CD4-positive, alpha-beta T cell (primary cell): ENCODE measurements at regions of chr16 and their contacts with region 1.

Region 1: DNA sequence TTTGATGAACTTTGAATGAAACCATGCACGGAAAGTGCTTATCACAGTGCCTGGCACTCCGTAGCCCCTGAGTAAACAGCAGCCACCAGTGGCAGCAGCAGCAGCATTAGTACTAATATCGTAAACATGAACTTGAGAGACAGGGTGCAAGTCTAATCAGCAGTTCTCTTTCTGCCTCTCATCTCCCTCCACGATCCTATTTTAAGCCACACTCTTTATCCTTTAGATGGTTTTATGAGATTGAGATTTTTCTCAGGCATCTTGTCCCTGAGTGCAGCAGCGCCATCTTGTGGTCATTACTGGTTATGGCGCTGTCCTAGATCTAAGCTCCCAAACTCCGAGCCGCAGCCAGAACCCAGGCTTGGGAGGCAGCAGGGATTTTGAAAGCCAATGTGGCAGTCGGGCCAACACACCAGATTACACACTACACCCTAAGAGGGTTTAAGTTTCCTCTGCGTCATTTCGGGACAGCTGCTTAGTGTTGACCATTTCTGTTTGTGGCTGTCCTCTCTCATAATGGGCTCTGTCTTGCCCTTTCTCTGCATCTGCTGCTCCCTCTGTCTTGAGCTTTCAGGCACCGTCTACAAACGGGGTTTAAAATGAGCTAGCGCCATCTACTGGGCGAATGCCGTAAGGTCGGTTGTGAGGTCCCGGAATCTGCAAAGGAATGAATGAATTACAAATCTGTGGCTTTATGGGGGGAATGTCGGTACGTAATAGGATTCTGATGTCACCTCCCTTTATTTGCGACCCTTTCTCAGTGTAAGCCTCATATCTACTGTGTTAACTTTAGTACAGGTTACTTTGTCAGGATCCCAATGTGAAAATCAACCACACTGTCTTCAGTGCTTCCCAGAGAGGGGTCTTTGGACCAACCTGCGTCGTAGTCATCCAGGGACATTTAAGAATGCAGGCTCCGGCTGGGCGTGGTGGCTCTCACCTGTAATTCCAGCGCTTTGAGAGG is 64.5 kb downstream of the CYLD start:
- DNase-seq: peak; percentile 76 to 93 (median 81)
- ATAC-seq: peak; percentile 94
- H3K4me3 ChIP-seq: peak overlapping the region; percentile 37
- H3K4me3 Mint-ChIP-seq: peak overlapping the region; percentile 80
- H3K27ac ChIP-seq: no peak overlapping the region
- H3K27ac Mint-ChIP-seq: peak overlapping the region; percentile 83
- H3K4me1 ChIP-seq: peaks cover 15% of the 10 kb centered on the region
- H3K4me1 Mint-ChIP-seq: peaks cover 13% of the 10 kb centered on the region
- H3K27me3 ChIP-seq: no peaks in the 10 kb centered on the region
- H3K27me3 Mint-ChIP-seq: no peaks in the 10 kb centered on the region
- CTCF ChIP-seq: peak; percentile 99

Region 2: DNA sequence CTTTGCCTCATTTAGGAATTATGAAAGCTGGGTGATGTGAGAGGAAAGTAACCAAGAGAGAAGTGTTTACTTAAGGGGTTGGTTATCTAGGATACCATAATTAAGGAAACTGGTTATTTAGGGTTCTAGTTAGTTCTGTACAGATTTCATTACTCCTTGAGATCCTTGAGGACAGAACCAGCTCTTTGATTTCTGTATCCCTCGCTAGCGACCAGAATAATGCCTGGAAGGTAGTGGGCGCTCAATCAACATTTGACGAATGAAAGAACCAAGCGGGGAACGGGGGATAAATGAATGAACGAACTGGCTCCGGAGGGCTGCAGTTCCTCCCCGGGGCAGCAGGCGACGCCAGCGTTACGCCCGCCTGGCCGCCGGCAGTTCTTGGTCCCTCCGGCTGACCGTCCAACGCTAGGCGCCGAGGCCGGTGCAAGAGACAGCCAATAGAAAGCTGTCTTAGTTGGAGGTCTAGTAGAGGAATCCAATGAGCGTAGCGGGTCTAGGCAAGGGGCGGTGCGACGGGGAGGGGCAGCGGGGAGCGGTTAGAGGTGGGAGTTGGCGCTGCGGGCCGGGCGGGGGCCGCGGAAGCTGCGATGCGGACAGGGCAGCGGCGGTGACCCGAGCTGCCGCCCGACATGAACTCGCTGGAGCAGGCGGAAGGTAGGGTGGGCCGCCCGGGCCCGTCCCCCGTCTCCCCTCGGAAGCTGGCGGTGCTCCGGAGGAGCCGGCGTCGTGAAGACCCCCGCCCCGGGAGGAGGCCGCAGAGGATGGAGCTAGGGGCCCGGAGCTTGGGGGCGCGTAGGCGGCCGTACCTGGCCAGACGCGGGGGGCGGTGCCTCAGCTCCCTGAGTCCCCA is 781.5 kb before region 1 on chr16 and contains the start of gene CNEP1R1:
- CTCF ChIA-PET with region 1: interaction called, 19 read pairs
- POLR2A ChIA-PET with region 1: interaction called, 13 read pairs
- intact Hi-C with region 1: loop called (anchors 1 to 2 kb)
- DNase-seq: peak; percentile 83 to 97 (median 91)
- ATAC-seq: peak; percentile 90
- H3K4me3 ChIP-seq: peak within 1 kb of the TSS; percentile 90
- H3K4me3 Mint-ChIP-seq: peak within 1 kb of the TSS; percentile 94
- H3K27ac ChIP-seq: peak within 1 kb of the TSS; percentile 58
- H3K27ac Mint-ChIP-seq: peak within 1 kb of the TSS; percentile 90
- H3K4me1 ChIP-seq: peaks cover 25% of the 10 kb centered on the region
- H3K4me1 Mint-ChIP-seq: peaks cover 38% of the 10 kb centered on the region
- H3K27me3 ChIP-seq: no peaks in the 10 kb centered on the region
- H3K27me3 Mint-ChIP-seq: no peaks in the 10 kb centered on the region
- CTCF ChIP-seq: peak; percentile 99
- total RNA-seq, gene CNEP1R1: 36.6 to 46.3 TPM

Region 3: GRCh38 chr16:50215680-50216079 is 590.7 kb before region 1 on chr16:
- CTCF ChIA-PET with region 1: interaction called, 8 read pairs
- POLR2A ChIA-PET with region 1: interaction called, 6 read pairs
- intact Hi-C with region 1: loop called (anchors 1 kb)
- DNase-seq: no peak
- ATAC-seq: no peak
- H3K4me3 ChIP-seq: no peak overlapping the region
- H3K4me3 Mint-ChIP-seq: no peak overlapping the region
- H3K27ac ChIP-seq: no peak overlapping the region
- H3K27ac Mint-ChIP-seq: no peak overlapping the region
- H3K4me1 ChIP-seq: peaks cover 1% of the 10 kb centered on the region
- H3K4me1 Mint-ChIP-seq: peaks cover 13% of the 10 kb centered on the region
- H3K27me3 ChIP-seq: no peaks in the 10 kb centered on the region
- H3K27me3 Mint-ChIP-seq: no peaks in the 10 kb centered on the region
- CTCF ChIP-seq: no peak

Region 4: GRCh38 chr16:50665128-50665878 is 141.1 kb before region 1 on chr16:
- CTCF ChIA-PET with region 1: interaction called, 62 read pairs
- POLR2A ChIA-PET with region 1: interaction called, 11 read pairs
- intact Hi-C with region 1: loop called in 1 of 2 experiments (anchors 2 kb)
- DNase-seq: peak; percentile 69 to 92 (median 85)
- ATAC-seq: peak; percentile 60
- H3K4me3 ChIP-seq: peak overlapping the region; percentile 58
- H3K4me3 Mint-ChIP-seq: peak overlapping the region; percentile 86
- H3K27ac ChIP-seq: peak overlapping the region in 1 of 2 donors; percentile 18
- H3K27ac Mint-ChIP-seq: peak overlapping the region; percentile 88
- H3K4me1 ChIP-seq: peaks cover 39% of the 10 kb centered on the region
- H3K4me1 Mint-ChIP-seq: peaks cover 44% of the 10 kb centered on the region
- H3K27me3 ChIP-seq: no peaks in the 10 kb centered on the region
- H3K27me3 Mint-ChIP-seq: no peaks in the 10 kb centered on the region
- CTCF ChIP-seq: peak; percentile 89

Region 5: DNA sequence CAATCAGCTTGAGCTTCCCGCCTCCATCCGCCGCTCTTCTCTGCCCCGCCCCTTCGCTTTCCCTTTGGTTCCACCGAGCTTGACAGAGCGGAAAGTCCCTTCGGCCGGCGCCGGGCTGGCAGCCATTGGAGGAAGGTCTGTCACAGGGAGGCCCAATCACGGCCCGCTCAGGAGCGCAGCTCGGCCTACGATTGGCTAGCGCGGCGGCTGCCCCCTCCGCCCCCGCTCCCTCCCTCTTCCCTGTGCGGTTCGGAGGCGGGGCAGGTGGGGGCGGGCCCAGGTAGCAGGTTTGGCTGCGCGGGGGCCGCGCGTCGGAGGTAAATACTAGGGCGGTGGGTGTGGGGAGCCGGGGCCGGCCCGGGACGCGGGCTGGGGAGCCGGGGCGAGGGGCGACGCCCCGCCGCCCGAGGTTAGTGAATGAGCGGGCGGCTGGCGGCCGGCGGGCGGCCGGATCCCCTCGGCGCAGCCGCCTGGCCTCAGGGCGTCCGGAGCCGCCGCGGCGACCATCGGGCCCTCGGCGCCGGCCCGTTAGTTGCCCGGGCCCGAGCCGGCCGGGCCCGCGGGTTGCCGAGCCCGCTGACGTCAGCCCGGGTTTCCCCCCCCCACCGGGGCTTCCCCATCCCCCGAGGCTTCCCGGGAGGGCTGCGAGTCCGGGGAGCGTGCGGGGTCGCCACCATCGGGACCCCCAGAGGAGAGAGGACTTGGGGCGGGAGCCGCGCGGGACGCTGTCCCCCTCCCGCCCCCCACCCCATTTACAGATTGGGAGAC is 64.4 kb before region 1 on chr16 and contains the start of gene CYLD:
- CTCF ChIA-PET with region 1: interaction called, 15 read pairs
- POLR2A ChIA-PET with region 1: interaction called, 9 read pairs
- intact Hi-C with region 1: loop called in 1 of 2 experiments (anchors 1 kb)
- DNase-seq: peak; percentile 98 to 100 (median 99)
- ATAC-seq: peak; percentile 88
- H3K4me3 ChIP-seq: peak within 1 kb of the TSS; percentile 80
- H3K4me3 Mint-ChIP-seq: peak within 1 kb of the TSS; percentile 99
- H3K27ac ChIP-seq: peak within 1 kb of the TSS; percentile 97 to 99
- H3K27ac Mint-ChIP-seq: peak within 1 kb of the TSS; percentile 87
- H3K4me1 ChIP-seq: peaks cover 15% of the 10 kb centered on the region
- H3K4me1 Mint-ChIP-seq: peaks cover 48% of the 10 kb centered on the region
- H3K27me3 ChIP-seq: no peaks in the 10 kb centered on the region
- H3K27me3 Mint-ChIP-seq: no peaks in the 10 kb centered on the region
- CTCF ChIP-seq: no peak
- total RNA-seq, gene CYLD: 360 to 373 TPM

Region 6: GRCh38 chr16:50781043-50781442 is 25.3 kb before region 1 on chr16:
- CTCF ChIA-PET with region 1: interaction called, 17 read pairs
- POLR2A ChIA-PET with region 1: interaction called, 5 read pairs
- intact Hi-C with region 1: no loop called
- DNase-seq: peak in 4 of 14 experiments; percentile 18 to 61 (median 56)
- ATAC-seq: peak; percentile 77
- H3K4me3 ChIP-seq: no peak overlapping the region
- H3K4me3 Mint-ChIP-seq: peak overlapping the region; percentile 56
- H3K27ac ChIP-seq: peak overlapping the region; percentile 36 to 45
- H3K27ac Mint-ChIP-seq: peak overlapping the region; percentile 92
- H3K4me1 ChIP-seq: peaks cover 17% of the 10 kb centered on the region
- H3K4me1 Mint-ChIP-seq: peaks cover 72% of the 10 kb centered on the region
- H3K27me3 ChIP-seq: no peaks in the 10 kb centered on the region
- H3K27me3 Mint-ChIP-seq: no peaks in the 10 kb centered on the region
- CTCF ChIP-seq: peak; percentile 32

Region 7: GRCh38 chr16:50902457-50902856 is 96.1 kb after region 1 on chr16:
- CTCF ChIA-PET with region 1: no interaction called
- POLR2A ChIA-PET with region 1: no interaction called
- intact Hi-C with region 1: no loop called
- DNase-seq: no peak
- ATAC-seq: no peak
- H3K4me3 ChIP-seq: no peak overlapping the region
- H3K4me3 Mint-ChIP-seq: no peak overlapping the region
- H3K27ac ChIP-seq: no peak overlapping the region
- H3K27ac Mint-ChIP-seq: no peak overlapping the region
- H3K4me1 ChIP-seq: no peaks in the 10 kb centered on the region
- H3K4me1 Mint-ChIP-seq: no peaks in the 10 kb centered on the region
- H3K27me3 ChIP-seq: peaks cover 0 to 2% of the 10 kb centered on the region in 2 experiments
- H3K27me3 Mint-ChIP-seq: peaks cover 44% of the 10 kb centered on the region
- CTCF ChIP-seq: no peak